ENCODE measurements at regions of chr6 and their contacts with region 1.

Region 1: GRCh38 chr6:13795041-13795750 is 19.2 kb downstream of the MCUR1 start:
- DNase-seq: peak; percentile 94
- ATAC-seq: peak; percentile 97
- H3K4me3 Mint-ChIP-seq: no peak overlapping the region
- H3K27ac Mint-ChIP-seq: peak overlapping the region; percentile 66
- H3K4me1 Mint-ChIP-seq: peaks cover 23% of the 10 kb centered on the region
- H3K27me3 Mint-ChIP-seq: no peaks in the 10 kb centered on the region

Region 2: GRCh38 chr6:13604546-13605416 is 190.4 kb before region 1 on chr6:
- CTCF ChIA-PET with region 1: no interaction called
- POLR2A ChIA-PET with region 1: no interaction called
- intact Hi-C with region 1: no loop called
- DNase-seq: no peak
- ATAC-seq: peak; percentile 33
- H3K4me3 Mint-ChIP-seq: no peak overlapping the region
- H3K27ac Mint-ChIP-seq: no peak overlapping the region
- H3K4me1 Mint-ChIP-seq: no peaks in the 10 kb centered on the region
- H3K27me3 Mint-ChIP-seq: no peaks in the 10 kb centered on the region

Region 3: DNA sequence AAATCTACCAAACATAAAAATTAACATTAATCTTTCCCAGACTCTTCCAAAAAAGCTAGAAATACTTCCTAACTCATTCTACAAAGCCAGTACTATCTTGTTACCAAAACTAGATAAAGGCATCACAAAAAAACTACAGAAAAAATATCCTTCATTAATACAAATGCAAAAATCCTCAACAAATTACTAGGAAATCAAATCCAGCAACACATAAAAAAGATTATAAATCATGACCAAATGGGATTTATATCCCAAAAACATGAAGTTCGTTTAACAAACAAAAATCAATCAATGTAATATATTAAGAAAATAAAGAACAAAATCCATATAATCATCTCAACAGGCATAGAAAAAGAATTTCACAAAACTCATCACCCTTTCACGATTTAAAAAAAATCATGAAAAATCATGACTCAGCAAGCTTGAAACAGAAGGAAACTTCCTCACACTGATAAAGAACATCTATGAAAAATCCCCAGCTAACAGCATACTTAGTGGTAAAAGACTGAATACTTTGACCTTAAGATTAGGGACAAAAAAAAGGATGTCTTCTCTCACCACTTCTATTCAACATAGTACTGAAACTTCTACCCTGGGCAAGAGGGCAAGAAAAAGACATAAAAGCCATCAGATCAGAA is 126.8 kb before region 1 on chr6:
- CTCF ChIA-PET with region 1: interaction called, 3 read pairs
- POLR2A ChIA-PET with region 1: no interaction called
- intact Hi-C with region 1: loop called in 1 of 2 experiments (anchors 2 kb)
- DNase-seq: no peak
- ATAC-seq: peak; percentile 75
- H3K4me3 Mint-ChIP-seq: peak overlapping the region; percentile 20
- H3K27ac Mint-ChIP-seq: peak overlapping the region; percentile 6
- H3K4me1 Mint-ChIP-seq: peaks cover 88% of the 10 kb centered on the region
- H3K27me3 Mint-ChIP-seq: no peaks in the 10 kb centered on the region

Region 4: DNA sequence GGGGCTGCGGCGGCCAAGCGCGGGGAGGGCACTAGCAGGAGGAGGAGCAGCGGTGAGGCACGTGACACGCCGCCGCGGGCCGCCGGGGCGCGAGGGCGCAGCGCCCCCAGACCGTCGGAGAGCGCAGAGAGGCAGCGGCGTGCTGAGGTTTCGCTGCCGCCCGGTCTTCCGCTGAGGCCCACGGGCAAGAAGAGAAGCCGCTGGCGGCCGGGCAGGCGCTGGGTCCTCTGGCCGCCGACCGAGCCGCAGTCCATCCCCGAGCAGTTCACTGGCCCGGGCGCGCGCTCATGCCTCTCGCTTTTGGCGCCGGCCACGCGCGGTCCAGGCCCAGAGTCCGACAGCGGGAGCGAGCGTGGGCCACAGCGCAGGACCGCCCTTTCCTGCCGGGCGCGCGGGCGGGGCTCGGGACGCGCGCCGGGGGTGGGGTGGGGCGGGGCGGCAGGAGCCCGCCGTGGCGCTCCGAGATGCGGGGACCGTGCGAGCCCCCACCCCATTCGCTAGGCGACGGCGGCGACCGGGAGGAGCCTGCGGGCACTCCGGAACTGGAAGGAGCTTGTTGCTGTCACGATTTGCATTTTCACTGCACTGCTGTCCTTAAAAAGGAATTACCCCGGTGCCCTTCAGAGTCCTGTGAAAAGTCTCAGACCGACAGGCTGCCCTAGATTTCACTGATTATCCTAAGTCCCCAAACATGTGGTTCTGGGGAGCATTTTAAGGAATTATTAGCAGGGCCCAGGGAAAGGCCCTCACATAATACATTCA is 19.2 kb after region 1 on chr6 and contains the start of gene MCUR1:
- CTCF ChIA-PET with region 1: interaction called, 9 read pairs
- POLR2A ChIA-PET with region 1: interaction called, 10 read pairs
- intact Hi-C with region 1: no loop called
- DNase-seq: peak; percentile 92
- ATAC-seq: peak; percentile 87
- H3K4me3 Mint-ChIP-seq: peak within 1 kb of the TSS; percentile 85
- H3K27ac Mint-ChIP-seq: peak within 1 kb of the TSS; percentile 87
- H3K4me1 Mint-ChIP-seq: peaks cover 27% of the 10 kb centered on the region
- H3K27me3 Mint-ChIP-seq: no peaks in the 10 kb centered on the region
- total RNA-seq, gene MCUR1: 37.9 to 59.3 TPM

Region 5: GRCh38 chr6:13908955-13909381 is 113.8 kb after region 1 on chr6:
- CTCF ChIA-PET with region 1: interaction called, 5 read pairs
- POLR2A ChIA-PET with region 1: no interaction called
- intact Hi-C with region 1: loop called in 1 of 2 experiments (anchors 1 kb)
- DNase-seq: peak; percentile 63
- ATAC-seq: peak; percentile 74
- H3K4me3 Mint-ChIP-seq: no peak overlapping the region
- H3K27ac Mint-ChIP-seq: no peak overlapping the region
- H3K4me1 Mint-ChIP-seq: peaks cover 2% of the 10 kb centered on the region
- H3K27me3 Mint-ChIP-seq: peaks cover 28% of the 10 kb centered on the region

Region 6: DNA sequence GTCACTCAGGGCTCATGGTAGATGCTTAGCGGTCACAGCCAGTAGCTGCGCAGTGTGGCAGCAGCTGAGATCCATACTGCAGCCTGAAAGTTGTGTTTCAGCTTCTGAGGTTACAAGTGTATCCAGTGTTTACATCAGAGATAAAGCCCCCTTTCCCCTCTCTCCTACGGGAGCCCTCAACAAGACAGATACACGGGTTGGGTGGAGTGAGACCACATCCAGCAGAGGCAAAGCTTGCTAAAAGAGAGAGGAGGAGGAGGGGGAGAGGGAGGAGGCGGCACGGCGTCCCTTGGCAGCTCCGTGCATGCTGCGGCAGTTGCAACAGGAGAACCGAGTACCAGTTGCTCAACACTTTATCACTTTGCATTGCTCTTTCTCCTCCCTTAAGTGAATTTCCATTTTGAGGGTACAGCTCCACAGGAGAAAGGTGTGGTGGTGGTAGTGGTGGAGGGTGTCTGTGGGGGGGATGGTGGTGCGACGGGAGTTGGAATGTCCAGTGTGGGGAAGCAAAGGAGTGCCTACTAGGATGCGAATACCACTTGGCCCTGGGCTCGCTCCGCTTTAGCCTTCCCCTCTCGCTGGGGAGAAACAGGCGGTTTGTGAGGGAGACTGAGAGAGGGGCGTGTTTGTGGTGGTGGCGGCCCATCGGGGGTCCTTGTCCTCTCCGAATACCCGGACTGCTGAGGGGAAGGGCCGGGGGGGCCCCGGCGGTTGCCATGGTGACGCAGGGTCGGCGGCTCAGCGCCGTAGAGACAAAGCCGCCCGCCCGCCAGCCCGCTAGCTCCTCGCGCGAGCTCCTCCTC is 129.2 kb after region 1 on chr6:
- CTCF ChIA-PET with region 1: interaction called, 5 read pairs
- POLR2A ChIA-PET with region 1: no interaction called
- intact Hi-C with region 1: loop called in 1 of 2 experiments (anchors 10 kb)
- DNase-seq: peak; percentile 31
- ATAC-seq: peak; percentile 88
- H3K4me3 Mint-ChIP-seq: peak overlapping the region; percentile 71
- H3K27ac Mint-ChIP-seq: no peak overlapping the region
- H3K4me1 Mint-ChIP-seq: peaks cover 14% of the 10 kb centered on the region
- H3K27me3 Mint-ChIP-seq: peaks cover 51% of the 10 kb centered on the region

Region 7: GRCh38 chr6:14046476-14047068 is 251.4 kb after region 1 on chr6:
- CTCF ChIA-PET with region 1: interaction called, 6 read pairs
- POLR2A ChIA-PET with region 1: no interaction called
- intact Hi-C with region 1: loop called (anchors 1 kb)
- DNase-seq: peak; percentile 70
- ATAC-seq: peak; percentile 95
- H3K4me3 Mint-ChIP-seq: no peak overlapping the region
- H3K27ac Mint-ChIP-seq: no peak overlapping the region
- H3K4me1 Mint-ChIP-seq: no peaks in the 10 kb centered on the region
- H3K27me3 Mint-ChIP-seq: peaks cover 22% of the 10 kb centered on the region

Region 8: GRCh38 chr6:14144678-14145113 is 349.5 kb after region 1 on chr6:
- CTCF ChIA-PET with region 1: no interaction called
- POLR2A ChIA-PET with region 1: no interaction called
- intact Hi-C with region 1: loop called in 1 of 2 experiments (anchors 2 kb)
- DNase-seq: peak; percentile 87
- ATAC-seq: peak; percentile 95
- H3K4me3 Mint-ChIP-seq: no peak overlapping the region
- H3K27ac Mint-ChIP-seq: no peak overlapping the region
- H3K4me1 Mint-ChIP-seq: peaks cover 5% of the 10 kb centered on the region
- H3K27me3 Mint-ChIP-seq: no peaks in the 10 kb centered on the region

Measured in activated CD4-positive, alpha-beta T cell treated with anti-CD3 and anti-CD28 coated beads for 36 hours (primary cell).